Mammary epithelial cell (primary cell): ENCODE measurements at regions of chrX and their contacts with region 1.

Region 1: DNA sequence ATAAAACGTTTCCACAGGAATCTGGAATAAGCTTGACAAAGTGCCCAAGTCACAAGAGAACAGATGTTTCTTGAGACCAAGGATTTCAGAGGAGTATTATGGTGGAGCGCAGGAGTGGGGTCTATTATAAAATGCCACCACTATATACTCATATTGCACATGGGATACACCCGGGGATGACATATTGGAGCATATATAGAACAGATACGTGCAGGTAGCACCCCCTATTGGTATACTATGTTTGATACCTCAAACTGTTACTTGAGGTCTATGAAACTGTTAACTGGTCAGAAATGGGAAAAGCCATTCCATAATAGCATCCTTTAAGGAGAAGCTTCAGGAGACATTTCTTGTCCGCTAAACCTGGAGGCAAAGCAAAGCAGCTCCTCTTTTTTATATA is 86.0 kb downstream of the PCYT1B start:
- DNase-seq: no peak
- H3K4me3 ChIP-seq: no peak overlapping the region
- H3K27ac ChIP-seq: no peak overlapping the region
- H3K4me1 ChIP-seq: no peaks in the 10 kb centered on the region
- H3K27me3 ChIP-seq: no peaks in the 10 kb centered on the region
- CTCF ChIP-seq: peak in 1 of 2 donors; percentile 23

Region 2: GRCh38 chrX:24317567-24317966 is 243.6 kb before region 1 on chrX:
- CTCF ChIA-PET with region 1: no interaction called
- dilution Hi-C with region 1: no loop called
- in situ Hi-C with region 1: no loop called
- intact Hi-C with region 1: no loop called
- DNase-seq: no peak
- H3K4me3 ChIP-seq: no peak overlapping the region
- H3K27ac ChIP-seq: no peak overlapping the region
- H3K4me1 ChIP-seq: no peaks in the 10 kb centered on the region
- H3K27me3 ChIP-seq: no peaks in the 10 kb centered on the region
- CTCF ChIP-seq: no peak

Region 3: DNA sequence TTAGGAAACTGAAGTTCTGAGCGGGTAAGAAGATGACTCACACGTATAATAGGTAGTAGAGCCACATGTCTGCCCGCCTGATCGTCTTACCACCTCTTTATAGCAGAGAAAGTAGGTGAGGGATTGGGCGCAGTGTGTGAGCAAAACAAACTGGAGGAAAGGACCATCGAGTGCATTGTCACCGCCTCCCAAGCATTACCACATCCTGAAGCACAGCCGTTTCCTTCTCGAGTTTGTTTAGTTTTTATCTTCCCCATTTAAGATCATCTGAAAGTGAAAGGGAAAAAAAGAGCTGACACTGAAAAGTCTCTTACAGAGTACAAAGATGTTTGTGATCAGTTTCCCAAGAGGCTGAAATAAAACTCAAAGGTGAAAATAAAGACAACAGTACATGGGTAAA is 81.2 kb before region 1 on chrX:
- CTCF ChIA-PET with region 1: no interaction called
- dilution Hi-C with region 1: no loop called
- in situ Hi-C with region 1: no loop called
- intact Hi-C with region 1: no loop called
- DNase-seq: no peak
- H3K4me3 ChIP-seq: no peak overlapping the region
- H3K27ac ChIP-seq: no peak overlapping the region
- H3K4me1 ChIP-seq: no peaks in the 10 kb centered on the region
- H3K27me3 ChIP-seq: no peaks in the 10 kb centered on the region
- CTCF ChIP-seq: no peak

Region 4: GRCh38 chrX:24574743-24575142 is 13.6 kb after region 1 on chrX:
- CTCF ChIA-PET with region 1: no interaction called
- dilution Hi-C with region 1: no loop called
- in situ Hi-C with region 1: no loop called
- intact Hi-C with region 1: no loop called
- DNase-seq: no peak
- H3K4me3 ChIP-seq: no peak overlapping the region
- H3K27ac ChIP-seq: no peak overlapping the region
- H3K4me1 ChIP-seq: no peaks in the 10 kb centered on the region
- H3K27me3 ChIP-seq: no peaks in the 10 kb centered on the region
- CTCF ChIP-seq: no peak

Region 5: DNA sequence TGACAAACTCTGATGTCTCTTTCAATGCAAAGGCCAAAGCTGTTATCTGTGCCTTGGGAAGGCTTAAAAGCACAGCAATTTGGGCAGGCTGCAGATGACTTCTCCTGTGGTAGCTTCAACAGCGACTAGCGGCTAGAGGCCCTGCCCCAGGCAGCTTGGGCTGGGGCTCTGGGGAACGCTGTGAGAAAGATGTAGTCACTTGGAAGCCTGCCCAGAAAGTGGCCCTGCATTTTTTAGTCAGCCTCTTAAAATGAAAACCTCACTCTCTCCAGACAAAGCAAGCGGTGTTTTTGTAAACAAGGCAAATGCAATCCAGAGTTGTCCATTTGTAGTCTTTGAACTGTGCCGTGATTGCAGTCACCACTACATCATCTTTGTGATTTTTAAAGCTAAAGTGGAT is 58.5 kb after region 1 on chrX:
- CTCF ChIA-PET with region 1: no interaction called
- dilution Hi-C with region 1: no loop called
- in situ Hi-C with region 1: loop called in 1 of 2 experiments (anchors 10 kb)
- intact Hi-C with region 1: no loop called
- DNase-seq: peak; percentile 54
- H3K4me3 ChIP-seq: no peak overlapping the region
- H3K27ac ChIP-seq: no peak overlapping the region
- H3K4me1 ChIP-seq: no peaks in the 10 kb centered on the region
- H3K27me3 ChIP-seq: no peaks in the 10 kb centered on the region
- CTCF ChIP-seq: no peak